ENCODE measurements at regions of chr9 and their contacts with region 1.

Region 1: GRCh38 chr9:34500623-34501267 is 22.0 kb downstream of the ENHO start:
- DNase-seq: peak; percentile 34 to 66
- ATAC-seq: peak in 7 of 8 donors; percentile 25 to 76 (median 46)
- H3K4me3 ChIP-seq: no peak overlapping the region
- H3K27ac ChIP-seq: no peak overlapping the region
- H3K4me1 ChIP-seq: peaks cover 0 to 26% (median 14%) of the 10 kb centered on the region in 9 donors
- H3K27me3 ChIP-seq: peaks cover 0 to 5% (median 0%) of the 10 kb centered on the region in 7 donors
- CTCF ChIP-seq: peak; percentile 93 to 100 (median 98)

Region 2: GRCh38 chr9:34328987-34329832 is 171.5 kb before region 1 on chr9 and contains the starts of genes KIF24 and NUDT2:
- intact Hi-C with region 1: loop called in 3 of 10 experiments (anchors 10 kb)
- DNase-seq: peak; percentile 93 to 99
- ATAC-seq: peak; percentile 96 to 98 (median 98)
- H3K4me3 ChIP-seq: peak within 1 kb of the TSS; percentile 62 to 93 (median 81)
- H3K27ac ChIP-seq: peak within 1 kb of the TSS; percentile 59 to 97 (median 92)
- H3K4me1 ChIP-seq: peaks cover 0 to 39% (median 28%) of the 10 kb centered on the region in 9 donors
- H3K27me3 ChIP-seq: no peaks in the 10 kb centered on the region
- CTCF ChIP-seq: peak in 2 of 9 donors; percentile 18 to 24
- total RNA-seq, gene KIF24: 0.25 to 1.2 (median 0.50) TPM
- total RNA-seq, gene NUDT2: 14.4 to 24.8 (median 18.4) TPM

Region 3: DNA sequence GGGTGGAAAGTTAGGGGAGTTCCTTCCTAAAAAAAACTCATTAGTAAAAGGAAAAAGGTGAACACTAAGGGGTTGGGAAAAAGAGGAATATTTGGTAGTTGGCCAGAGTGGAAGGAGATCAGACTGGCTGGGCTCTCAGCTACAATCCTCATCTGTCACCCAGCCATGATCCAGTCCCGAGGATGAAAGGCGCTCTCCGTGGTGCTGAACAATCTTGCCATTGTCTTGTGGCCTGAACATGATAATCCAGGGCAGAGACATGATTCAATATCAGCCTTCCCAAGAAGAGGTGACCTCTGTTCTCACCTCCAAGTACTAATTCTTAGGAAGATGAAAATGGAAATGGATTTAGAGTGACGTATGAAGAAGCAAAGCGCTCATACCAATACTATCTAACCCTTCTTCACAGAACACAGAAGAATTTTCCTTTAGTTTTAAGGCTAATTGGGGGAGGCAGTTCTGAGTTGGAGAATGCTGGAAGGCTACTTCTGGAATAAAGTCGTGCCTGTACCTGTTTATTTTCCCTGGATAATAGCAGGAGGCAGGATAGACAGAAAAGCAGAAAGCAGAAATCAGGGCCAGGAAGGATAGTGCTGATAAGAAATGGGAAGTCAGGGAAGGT is 87.4 kb before region 1 on chr9:
- intact Hi-C with region 1: loop called in 3 of 10 experiments (anchors 2 to 10 kb)
- DNase-seq: peak; percentile 13 to 40
- ATAC-seq: peak in 2 of 8 donors; percentile 59 to 64
- H3K4me3 ChIP-seq: no peak overlapping the region
- H3K27ac ChIP-seq: no peak overlapping the region
- H3K4me1 ChIP-seq: peaks cover 0 to 10% (median 0%) of the 10 kb centered on the region in 9 donors
- H3K27me3 ChIP-seq: no peaks in the 10 kb centered on the region
- CTCF ChIP-seq: no peak

Region 4: DNA sequence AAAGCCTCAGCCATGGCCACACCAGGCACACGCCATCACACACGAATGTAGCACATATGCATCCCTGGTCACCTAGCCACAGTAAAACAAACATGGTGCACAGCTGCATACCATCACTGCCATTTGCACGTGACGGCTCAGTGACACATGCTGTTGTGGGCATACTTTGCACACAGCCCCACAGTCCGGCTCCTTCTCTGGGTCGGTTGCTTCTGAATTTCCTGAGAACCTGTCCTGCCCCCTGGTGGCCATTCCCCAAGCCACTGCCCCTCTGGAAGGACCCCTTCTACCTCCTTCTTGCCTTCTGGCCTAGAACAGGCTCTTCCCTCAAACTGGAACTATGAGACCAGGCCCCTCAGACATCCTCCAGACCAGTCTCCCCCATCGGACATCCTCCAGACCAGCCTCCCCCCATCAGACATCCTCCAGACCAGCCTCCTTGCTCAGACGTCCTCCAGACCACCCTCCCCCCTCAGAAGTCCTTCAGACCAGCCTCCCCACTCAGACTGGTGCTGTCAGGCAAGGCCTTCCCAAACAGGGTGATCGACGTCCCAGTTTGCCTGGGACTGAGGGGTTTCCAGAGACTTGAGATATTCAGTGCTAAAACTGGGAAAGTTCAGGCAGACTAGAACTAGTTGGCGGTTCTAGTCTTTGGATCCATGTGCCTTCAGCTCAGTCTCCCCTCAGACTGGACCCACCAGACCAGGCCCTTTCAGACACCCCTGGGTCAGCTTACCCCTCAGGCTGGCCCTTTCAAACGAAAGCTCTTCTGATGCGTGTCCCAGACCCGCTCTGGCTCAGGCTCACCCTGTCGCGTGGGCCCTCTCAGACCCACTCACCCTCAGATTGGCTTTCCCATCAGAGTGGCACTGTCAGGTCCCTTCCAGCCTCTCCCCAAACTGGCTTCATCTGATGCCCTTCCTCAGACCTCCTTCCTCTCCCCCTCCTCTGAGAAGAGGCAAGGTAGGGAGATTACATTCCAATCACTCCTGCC is 46.4 kb after region 1 on chr9:
- intact Hi-C with region 1: loop called in 2 of 10 experiments (anchors 5 kb)
- DNase-seq: peak; percentile 56 to 64
- ATAC-seq: peak; percentile 44 to 78 (median 68)
- H3K4me3 ChIP-seq: no peak overlapping the region
- H3K27ac ChIP-seq: no peak overlapping the region
- H3K4me1 ChIP-seq: peaks cover 0 to 6% (median 0%) of the 10 kb centered on the region in 9 donors
- H3K27me3 ChIP-seq: peaks cover 0 to 9% (median 3%) of the 10 kb centered on the region in 7 donors
- CTCF ChIP-seq: peak; percentile 44 to 72 (median 67)

Region 5: GRCh38 chr9:34603610-34604231 is 103.0 kb after region 1 on chr9:
- intact Hi-C with region 1: loop called in 2 of 10 experiments (anchors 5 kb)
- DNase-seq: peak; percentile 78 to 85
- ATAC-seq: peak; percentile 76 to 91 (median 87)
- H3K4me3 ChIP-seq: no peak overlapping the region
- H3K27ac ChIP-seq: no peak overlapping the region
- H3K4me1 ChIP-seq: no peaks in the 10 kb centered on the region
- H3K27me3 ChIP-seq: no peaks in the 10 kb centered on the region
- CTCF ChIP-seq: peak; percentile 82 to 94 (median 93)

Measured in heart right ventricle (tissue), 16 donors.